K562 (cell line): ENCODE measurements at regions of chrX and their contacts with region 1.

Region 1: DNA sequence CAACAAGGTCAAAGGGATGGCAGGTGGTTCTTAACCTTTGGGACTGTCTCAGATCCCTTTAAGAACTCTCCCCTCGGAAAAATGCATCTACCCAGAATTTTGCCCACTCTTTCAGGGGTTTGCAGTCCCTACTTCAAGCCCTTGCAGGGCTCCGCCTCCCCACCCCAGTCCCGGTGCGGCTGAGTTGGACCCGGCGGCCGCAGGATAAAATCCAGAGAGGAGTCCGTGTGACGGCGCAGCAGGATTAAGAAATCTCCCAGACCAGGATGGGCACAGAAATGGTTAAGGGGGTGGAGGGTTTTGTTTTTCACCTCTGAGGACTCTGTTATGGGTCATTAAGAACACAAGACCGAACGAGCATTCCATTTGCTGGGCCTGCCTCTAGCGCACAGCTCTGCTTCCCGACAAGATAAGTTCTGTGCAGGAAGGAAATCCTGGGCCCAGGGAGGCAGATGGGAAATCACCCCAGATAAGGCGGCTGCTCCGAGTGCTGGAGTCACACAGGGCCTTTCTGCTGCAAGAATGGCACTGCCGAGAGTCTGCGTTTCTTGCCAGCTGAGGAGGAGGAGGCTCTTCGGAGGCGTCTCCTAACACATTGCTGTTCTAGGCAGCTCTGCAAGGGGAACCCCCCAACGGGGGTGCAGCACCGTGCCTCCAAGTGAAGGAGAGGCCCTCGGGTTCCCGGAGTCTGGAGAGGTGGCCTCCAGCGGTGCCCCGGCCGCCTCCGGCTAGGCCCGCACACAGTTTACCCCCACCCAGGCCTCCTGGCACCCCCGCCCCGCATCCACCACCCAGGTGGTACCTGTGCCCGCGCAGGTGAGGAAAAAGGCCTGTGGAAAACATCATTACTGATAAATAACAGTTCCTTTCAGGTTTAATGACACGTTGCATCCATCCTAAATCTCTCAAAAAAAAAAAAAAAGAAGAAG is 277.6 kb downstream of the BCOR start:
- DNase-seq: no peak
- ATAC-seq: no peak
- H3K4me3 ChIP-seq: no peak overlapping the region
- H3K27ac ChIP-seq: no peak overlapping the region
- H3K4me1 ChIP-seq: peaks cover 10 to 26% of the 10 kb centered on the region in 2 experiments
- H3K27me3 ChIP-seq: no peaks in the 10 kb centered on the region
- CTCF ChIP-seq: no peak
- EP300 ChIP-seq: no peak
- POLR2A ChIP-seq: no peak
- RAD21 ChIP-seq: no peak

Region 2: DNA sequence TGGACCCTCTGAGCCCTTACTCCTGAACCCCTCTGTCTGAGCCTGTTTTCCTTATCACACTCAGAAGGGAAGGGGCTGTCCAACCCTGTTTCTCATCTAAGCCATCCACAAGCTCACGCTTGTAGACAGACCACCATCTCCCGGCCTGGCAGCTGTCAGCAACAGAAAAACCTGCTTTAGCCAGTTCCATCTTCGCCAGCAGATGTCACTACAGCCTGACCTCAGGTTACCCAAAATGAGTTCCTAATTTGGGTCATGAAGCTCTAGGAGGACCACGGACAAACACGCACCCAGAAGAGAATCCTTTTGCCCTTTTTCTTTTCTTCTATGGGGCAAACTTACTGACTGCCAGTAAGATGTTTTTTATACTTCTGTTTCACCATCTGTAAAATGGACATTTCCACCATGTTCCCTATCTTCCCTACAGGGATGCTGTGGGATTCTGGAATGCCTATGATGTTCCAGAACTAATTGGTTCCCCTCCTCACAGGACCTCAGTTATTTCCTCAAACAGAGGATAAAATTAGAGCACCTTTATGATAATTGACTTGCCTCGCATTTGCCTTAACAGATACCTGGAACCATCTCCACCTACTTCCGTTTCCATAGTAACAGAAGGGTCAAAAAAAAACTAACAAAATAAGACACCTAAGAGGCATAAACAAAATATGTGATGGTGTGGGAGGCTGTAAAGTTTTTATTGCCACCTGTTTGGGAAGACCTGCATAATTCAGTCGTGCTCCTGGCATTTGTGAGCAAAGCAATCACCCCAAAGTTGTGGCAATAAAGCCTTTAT is 167.7 kb before region 1 on chrX:
- CTCF ChIA-PET with region 1: no interaction called
- POLR2A ChIA-PET with region 1: no interaction called
- in situ Hi-C with region 1: no loop called
- intact Hi-C with region 1: no loop called
- DNase-seq: peak; percentile 32 to 59 (median 38)
- ATAC-seq: peak; percentile 83
- H3K4me3 ChIP-seq: no peak overlapping the region
- H3K27ac ChIP-seq: no peak overlapping the region
- H3K4me1 ChIP-seq: no peaks in the 10 kb centered on the region; a peak in 1 of 5 replicates
- H3K27me3 ChIP-seq: peaks cover 0 to 4% of the 10 kb centered on the region in 2 experiments; a peak in 1 of 5 replicates
- CTCF ChIP-seq: peak; percentile 61 to 67 (median 63)
- EP300 ChIP-seq: no peak
- POLR2A ChIP-seq: no peak
- RAD21 ChIP-seq: peak; percentile 70 to 72

Region 3: DNA sequence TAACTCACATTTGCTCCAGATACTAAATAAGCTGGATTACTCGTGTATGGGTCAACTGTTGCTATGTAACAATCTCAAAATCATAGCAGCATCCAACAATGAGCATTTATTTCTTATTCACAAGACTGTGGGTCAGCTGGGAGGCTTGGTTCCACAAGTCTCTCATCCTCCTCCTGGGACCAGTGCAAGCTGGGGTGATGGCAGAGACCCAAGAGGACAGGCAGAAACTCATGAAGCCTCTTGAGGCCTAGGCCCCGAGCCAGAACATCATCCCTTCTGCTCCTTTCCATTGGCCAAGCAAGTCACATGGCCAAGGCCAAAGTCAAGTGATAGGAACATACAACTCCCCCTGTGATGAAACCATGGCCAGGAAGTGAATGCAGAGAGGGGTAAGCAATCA is 144.6 kb before region 1 on chrX:
- CTCF ChIA-PET with region 1: no interaction called
- POLR2A ChIA-PET with region 1: no interaction called
- in situ Hi-C with region 1: no loop called
- intact Hi-C with region 1: no loop called
- DNase-seq: no peak
- ATAC-seq: no peak
- H3K4me3 ChIP-seq: no peak overlapping the region
- H3K27ac ChIP-seq: no peak overlapping the region
- H3K4me1 ChIP-seq: peaks cover 0 to 3% of the 10 kb centered on the region in 2 experiments; a peak in 2 of 5 replicates
- H3K27me3 ChIP-seq: no peaks in the 10 kb centered on the region
- CTCF ChIP-seq: no peak
- EP300 ChIP-seq: no peak
- POLR2A ChIP-seq: no peak
- RAD21 ChIP-seq: no peak

Region 4: DNA sequence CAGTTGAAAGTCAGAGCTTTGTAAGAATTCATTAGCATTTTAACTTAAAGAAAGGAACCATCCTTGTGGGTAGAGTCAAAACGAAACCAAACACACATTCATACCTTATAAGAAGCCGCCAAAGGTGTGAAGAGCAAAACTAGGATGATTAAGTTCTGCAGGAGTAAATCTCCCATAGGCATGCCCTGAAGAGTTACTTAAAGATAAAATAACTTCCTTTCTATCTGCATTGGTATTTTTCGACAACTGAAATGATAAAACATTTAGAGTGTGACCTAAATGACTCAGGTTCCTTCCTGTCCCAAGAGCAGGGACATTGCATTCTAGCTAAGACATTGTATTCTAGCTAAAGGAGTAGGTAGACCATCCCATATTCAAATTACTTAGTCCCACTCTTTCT is 202.2 kb after region 1 on chrX:
- CTCF ChIA-PET with region 1: no interaction called
- POLR2A ChIA-PET with region 1: no interaction called
- in situ Hi-C with region 1: no loop called
- intact Hi-C with region 1: no loop called
- DNase-seq: no peak
- ATAC-seq: no peak
- H3K4me3 ChIP-seq: no peak overlapping the region
- H3K27ac ChIP-seq: no peak overlapping the region
- H3K4me1 ChIP-seq: no peaks in the 10 kb centered on the region; a peak in 2 of 5 replicates
- H3K27me3 ChIP-seq: no peaks in the 10 kb centered on the region
- CTCF ChIP-seq: no peak
- EP300 ChIP-seq: no peak
- POLR2A ChIP-seq: no peak
- RAD21 ChIP-seq: no peak

Region 5: DNA sequence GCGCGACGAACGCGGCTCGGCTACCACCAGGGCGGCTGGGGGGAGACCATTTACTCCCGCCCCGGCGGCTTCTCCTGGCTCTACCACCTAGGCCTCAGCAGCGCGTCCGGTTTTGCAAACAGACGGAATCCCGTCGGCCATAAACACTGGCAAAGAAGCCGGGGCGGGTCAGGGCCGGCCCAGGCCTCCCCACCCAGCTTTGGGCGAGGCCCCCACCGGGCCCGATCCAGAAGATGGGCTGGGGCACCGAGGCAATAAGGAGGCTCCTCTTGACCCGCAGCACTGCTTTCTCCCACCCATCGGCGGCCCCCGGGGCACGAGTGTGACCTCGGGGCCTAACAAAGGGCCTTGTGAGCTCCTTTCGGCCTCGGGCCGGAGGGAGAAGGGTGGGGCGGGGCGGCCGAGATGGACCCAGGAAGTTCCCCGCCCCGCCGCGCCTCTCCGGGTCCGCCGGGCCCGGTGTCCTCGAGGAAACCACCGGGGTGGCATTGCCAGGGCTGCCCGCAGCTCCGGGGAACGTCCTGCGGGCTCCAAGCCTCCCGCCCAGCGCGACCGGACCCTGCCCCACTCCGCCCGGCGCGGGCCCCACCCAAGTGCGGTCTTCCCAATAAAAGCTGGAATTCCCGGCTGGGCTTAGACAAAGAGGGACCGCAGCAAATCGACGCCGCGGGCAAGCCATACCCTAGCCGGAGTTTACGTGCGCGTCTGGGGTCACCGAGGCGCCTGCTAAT is 271.7 kb after region 1 on chrX:
- CTCF ChIA-PET with region 1: no interaction called
- POLR2A ChIA-PET with region 1: no interaction called
- in situ Hi-C with region 1: no loop called
- intact Hi-C with region 1: loop called (anchors 2 kb)
- DNase-seq: peak in 1 of 4 experiments; percentile 31
- ATAC-seq: no peak
- H3K4me3 ChIP-seq: peak overlapping the region; percentile 70
- H3K27ac ChIP-seq: peak overlapping the region; percentile 57; the same call in 2 of the 3 replicates
- H3K4me1 ChIP-seq: peaks cover 50 to 61% of the 10 kb centered on the region in 2 experiments
- H3K27me3 ChIP-seq: no peaks in the 10 kb centered on the region
- CTCF ChIP-seq: no peak
- EP300 ChIP-seq: no peak
- POLR2A ChIP-seq: 0 out of 2 replicates have a peak, but pooled peaks have one; percentile 20
- RAD21 ChIP-seq: no peak

Region 6: GRCh38 chrX:40237731-40238178 is 417.6 kb after region 1 on chrX:
- CTCF ChIA-PET with region 1: no interaction called
- POLR2A ChIA-PET with region 1: no interaction called
- in situ Hi-C with region 1: no loop called
- intact Hi-C with region 1: no loop called
- DNase-seq: no peak
- ATAC-seq: no peak
- H3K4me3 ChIP-seq: no peak overlapping the region
- H3K27ac ChIP-seq: no peak overlapping the region
- H3K4me1 ChIP-seq: peaks cover 7 to 19% of the 10 kb centered on the region in 2 experiments; a peak in 4 of 5 replicates
- H3K27me3 ChIP-seq: no peaks in the 10 kb centered on the region
- CTCF ChIP-seq: no peak
- EP300 ChIP-seq: no peak
- POLR2A ChIP-seq: no peak
- RAD21 ChIP-seq: no peak